Activated naive CD4-positive, alpha-beta T cell treated with anti-CD3 and anti-CD28 coated beads, Interleukin-2, amount 10 ng/mL, durations not matched to agents 7 days and 5 days (primary cell): ENCODE measurements at regions of chr11 and their contacts with region 1.

Region 1: DNA sequence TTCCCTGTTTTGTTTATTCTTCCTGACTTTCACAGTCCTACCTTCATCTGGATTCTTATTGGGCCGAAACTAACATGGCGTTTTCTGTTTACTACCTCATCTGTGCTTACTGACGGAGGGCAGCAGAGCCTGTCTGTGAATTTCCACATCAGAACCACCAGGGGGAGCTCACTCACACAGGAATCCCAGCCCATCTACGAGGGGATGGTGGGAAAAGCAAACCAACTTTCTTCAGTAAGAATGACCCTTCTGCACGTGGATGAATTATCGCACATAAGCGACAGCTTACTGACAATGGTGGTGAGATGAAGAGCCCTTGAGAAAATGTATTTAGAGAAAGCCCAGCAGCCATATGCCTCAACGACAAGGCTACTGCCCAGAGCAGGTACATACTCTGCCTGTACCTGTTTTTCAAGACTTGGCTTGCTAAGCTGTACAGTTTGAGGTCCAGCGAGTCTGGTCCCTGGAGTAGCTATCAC is 42.5 kb downstream of the LARGE2 start:
- DNase-seq: peak; percentile 67
- H3K4me3 Mint-ChIP-seq: no peak overlapping the region
- H3K27ac Mint-ChIP-seq: no peak overlapping the region
- H3K4me1 Mint-ChIP-seq: no peaks in the 10 kb centered on the region
- H3K27me3 Mint-ChIP-seq: no peaks in the 10 kb centered on the region

Region 2: GRCh38 chr11:45110562-45110961 is 854.4 kb before region 1 on chr11:
- CTCF ChIA-PET with region 1: no interaction called
- DNase-seq: peak; percentile 47
- H3K4me3 Mint-ChIP-seq: no peak overlapping the region
- H3K27ac Mint-ChIP-seq: no peak overlapping the region
- H3K4me1 Mint-ChIP-seq: no peaks in the 10 kb centered on the region
- H3K27me3 Mint-ChIP-seq: peaks cover 28% of the 10 kb centered on the region

Region 3: DNA sequence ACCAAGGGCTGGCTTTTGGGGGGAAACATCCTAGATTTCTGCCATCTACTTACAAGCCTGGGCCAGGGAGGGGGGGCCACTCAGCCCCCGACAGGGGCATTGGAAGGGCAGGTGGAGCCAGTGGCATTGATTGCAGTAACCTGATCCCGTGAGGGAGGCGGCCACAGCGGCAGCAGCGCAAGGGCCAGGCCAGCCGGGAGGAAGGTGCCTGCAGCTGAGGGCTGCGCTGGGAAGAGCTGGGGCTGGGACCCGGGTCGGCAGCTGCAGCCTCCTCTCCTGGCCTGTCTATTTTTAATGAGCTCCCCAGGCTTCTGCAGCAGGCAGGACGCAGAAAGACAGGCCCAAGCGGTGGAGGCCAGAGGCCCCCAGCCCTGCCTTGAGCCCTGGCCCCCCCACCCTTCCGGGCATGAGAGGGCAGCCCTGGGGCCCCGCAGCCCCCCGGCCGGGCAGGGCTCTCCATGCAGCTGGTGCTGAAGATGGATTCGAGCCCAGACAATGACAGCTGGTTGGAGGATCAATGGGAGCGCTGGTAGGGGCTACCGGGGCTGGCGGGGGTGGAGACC is 68.4 kb before region 1 on chr11:
- CTCF ChIA-PET with region 1: no interaction called
- DNase-seq: no peak
- H3K4me3 Mint-ChIP-seq: no peak overlapping the region
- H3K27ac Mint-ChIP-seq: no peak overlapping the region
- H3K4me1 Mint-ChIP-seq: peaks cover 5% of the 10 kb centered on the region
- H3K27me3 Mint-ChIP-seq: peaks cover 87% of the 10 kb centered on the region

Region 4: DNA sequence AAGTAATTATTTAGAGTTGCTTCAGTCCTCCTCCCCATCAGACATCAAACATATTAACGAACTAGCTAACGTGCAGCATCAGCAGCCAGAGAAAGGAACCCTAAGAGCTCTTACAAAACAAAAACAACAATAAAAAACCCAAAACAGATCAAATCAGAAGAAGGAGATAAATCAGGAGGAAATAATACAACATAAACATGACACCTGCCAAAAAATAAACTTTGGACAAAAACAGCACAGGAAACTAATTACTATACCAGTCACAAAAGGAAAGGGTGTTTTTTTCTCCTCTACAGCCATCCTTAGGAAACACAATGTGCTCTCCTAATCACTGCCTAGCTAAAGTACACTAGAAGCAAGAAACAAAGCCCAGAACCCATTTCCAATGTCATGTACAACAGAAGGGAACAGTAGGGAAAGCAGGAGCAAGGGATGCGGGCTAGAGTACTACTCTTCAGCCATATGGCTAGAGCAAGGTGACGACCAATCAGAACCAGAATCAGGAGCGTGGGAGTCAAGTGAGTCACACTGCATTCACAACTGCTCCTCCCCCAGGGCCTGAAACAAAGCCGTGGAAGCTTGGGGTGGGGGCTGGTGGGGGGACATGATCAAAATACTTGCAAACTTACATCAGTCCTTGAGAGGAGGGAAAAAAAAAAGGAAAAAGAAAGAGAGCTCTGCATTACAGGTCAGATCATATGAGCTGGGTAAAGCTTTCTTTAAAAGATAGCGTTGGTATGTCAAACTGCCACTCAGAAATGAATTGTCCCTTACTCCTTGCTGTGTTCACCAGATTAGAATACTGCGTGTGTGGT is 17.9 kb after region 1 on chr11:
- CTCF ChIA-PET with region 1: interaction called, 18 read pairs
- DNase-seq: no peak
- H3K4me3 Mint-ChIP-seq: no peak overlapping the region
- H3K27ac Mint-ChIP-seq: no peak overlapping the region
- H3K4me1 Mint-ChIP-seq: no peaks in the 10 kb centered on the region
- H3K27me3 Mint-ChIP-seq: no peaks in the 10 kb centered on the region

Region 5: GRCh38 chr11:46001448-46001914 is 36.5 kb after region 1 on chr11:
- CTCF ChIA-PET with region 1: interaction called, 52 read pairs
- DNase-seq: no peak
- H3K4me3 Mint-ChIP-seq: no peak overlapping the region
- H3K27ac Mint-ChIP-seq: no peak overlapping the region
- H3K4me1 Mint-ChIP-seq: no peaks in the 10 kb centered on the region
- H3K27me3 Mint-ChIP-seq: no peaks in the 10 kb centered on the region

Region 6: DNA sequence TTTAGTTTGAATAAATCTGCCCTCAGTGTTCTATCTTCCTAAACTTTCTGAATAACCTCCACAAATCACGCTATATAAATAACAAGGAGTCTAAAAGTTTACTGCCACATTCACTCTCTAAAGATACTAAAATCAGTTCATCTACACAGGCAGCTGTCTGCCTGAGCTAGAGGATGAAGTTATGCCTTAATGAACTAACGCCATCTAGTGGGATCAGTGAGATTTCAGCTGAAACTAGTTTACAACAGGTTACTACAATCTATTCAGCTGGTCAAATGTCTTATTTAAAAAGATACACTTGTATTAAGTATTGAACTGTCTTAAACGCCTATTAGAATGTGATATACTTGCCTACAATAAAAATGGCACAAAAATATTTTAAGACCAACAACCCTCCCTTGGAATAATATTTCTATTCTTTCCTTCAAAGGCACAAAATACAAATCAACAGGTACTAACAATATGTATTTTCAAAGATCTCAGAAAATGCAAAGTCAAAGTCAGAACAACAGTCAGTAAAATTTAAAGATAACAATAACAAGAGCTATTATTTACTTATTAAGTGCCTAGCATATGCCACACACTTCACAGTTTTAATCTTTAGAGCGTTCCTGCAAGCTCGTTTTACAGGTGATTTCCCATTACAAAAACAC is 41.6 kb after region 1 on chr11:
- CTCF ChIA-PET with region 1: interaction called, 52 read pairs
- DNase-seq: peak; percentile 33
- H3K4me3 Mint-ChIP-seq: no peak overlapping the region
- H3K27ac Mint-ChIP-seq: no peak overlapping the region
- H3K4me1 Mint-ChIP-seq: no peaks in the 10 kb centered on the region
- H3K27me3 Mint-ChIP-seq: no peaks in the 10 kb centered on the region

Region 7: GRCh38 chr11:46117842-46118241 is 152.9 kb after region 1 on chr11:
- CTCF ChIA-PET with region 1: interaction called, 16 read pairs
- DNase-seq: no peak
- H3K4me3 Mint-ChIP-seq: no peak overlapping the region
- H3K27ac Mint-ChIP-seq: peak overlapping the region; percentile 16
- H3K4me1 Mint-ChIP-seq: peaks cover 64% of the 10 kb centered on the region
- H3K27me3 Mint-ChIP-seq: peaks cover 4% of the 10 kb centered on the region

Region 8: GRCh38 chr11:46308631-46309419 is 343.9 kb after region 1 on chr11:
- CTCF ChIA-PET with region 1: interaction called, 19 read pairs
- DNase-seq: peak; percentile 78
- H3K4me3 Mint-ChIP-seq: no peak overlapping the region
- H3K27ac Mint-ChIP-seq: no peak overlapping the region
- H3K4me1 Mint-ChIP-seq: peaks cover 20% of the 10 kb centered on the region
- H3K27me3 Mint-ChIP-seq: peaks cover 24% of the 10 kb centered on the region